Right ventricle myocardium inferior (tissue), 1 donor: ENCODE measurements at regions of chr14 and their contacts with region 1.

Region 1: GRCh38 chr14:77097700-77098528 is at the start of gene CIPC:
- DNase-seq: peak; percentile 100
- ATAC-seq: peak; percentile 97
- total RNA-seq, gene CIPC: 72.7 TPM

Region 2: DNA sequence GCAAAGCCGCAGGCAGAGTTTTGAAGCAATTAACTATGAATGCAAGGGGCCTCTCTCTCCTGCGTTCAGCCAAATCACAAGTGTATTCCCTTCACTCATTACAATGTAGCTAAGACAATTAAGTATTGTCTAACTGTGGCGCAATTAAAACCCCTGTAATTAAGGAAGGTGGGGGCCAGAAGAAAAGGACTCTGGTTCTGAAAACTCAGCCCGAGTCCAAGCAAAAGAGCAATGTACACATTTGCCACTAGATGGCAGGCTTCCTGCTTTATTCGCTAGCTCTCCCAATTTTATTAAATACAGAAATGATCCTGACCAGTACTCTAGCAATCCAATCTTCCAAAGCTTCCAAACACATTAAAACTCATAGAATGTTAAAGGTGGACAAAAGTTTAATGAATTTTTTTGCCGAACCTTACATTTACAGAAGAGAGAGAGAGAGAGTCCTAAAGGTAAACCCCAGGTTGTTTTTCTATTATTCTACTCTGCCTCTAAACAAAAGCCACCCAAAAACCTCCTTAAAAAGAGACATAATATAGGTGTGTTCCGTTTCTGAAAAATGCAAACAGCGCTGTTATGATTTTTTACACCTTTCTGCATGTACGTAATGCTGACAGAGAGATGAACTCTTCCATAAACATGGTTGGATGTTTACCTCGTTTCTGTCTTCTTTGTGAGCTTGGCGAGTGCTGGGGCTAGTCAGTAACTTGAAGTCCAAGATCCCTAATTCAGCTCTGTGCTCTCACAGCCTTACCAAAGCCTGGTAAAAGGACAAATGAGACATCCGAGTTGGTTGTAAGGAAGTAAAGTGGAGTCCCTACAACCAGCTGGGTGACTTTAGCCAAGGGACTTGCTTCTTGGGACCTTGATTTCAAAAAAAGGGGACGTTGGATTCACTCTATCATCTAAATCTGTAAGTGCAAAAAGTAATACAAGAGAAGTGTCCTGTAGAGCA is 387.6 kb before region 1 on chr14:
- intact Hi-C with region 1: loop called (anchors 10 kb)
- DNase-seq: no peak
- ATAC-seq: peak; percentile 63

Region 3: DNA sequence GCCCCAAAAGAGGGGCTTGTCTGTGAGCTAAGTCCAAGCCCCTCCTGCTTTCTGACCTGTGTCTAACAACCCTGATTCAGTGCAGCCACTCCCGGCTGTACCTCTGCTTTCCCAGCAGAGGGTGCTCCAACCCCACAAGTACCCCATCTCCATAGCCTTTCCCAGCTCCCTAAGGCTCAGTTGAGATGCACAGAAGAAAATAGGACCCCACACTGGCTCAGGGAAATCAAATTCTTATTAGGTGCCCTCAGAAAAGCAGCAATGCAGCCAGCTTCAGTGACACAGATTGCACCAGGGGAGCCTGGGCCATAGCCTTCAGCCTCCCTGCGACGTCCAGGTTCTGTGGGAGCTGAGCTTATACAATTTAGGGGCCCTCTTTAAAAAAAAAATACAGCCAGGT is 221.8 kb before region 1 on chr14:
- intact Hi-C with region 1: loop called (anchors 2 kb)
- DNase-seq: no peak
- ATAC-seq: peak; percentile 92

Region 4: DNA sequence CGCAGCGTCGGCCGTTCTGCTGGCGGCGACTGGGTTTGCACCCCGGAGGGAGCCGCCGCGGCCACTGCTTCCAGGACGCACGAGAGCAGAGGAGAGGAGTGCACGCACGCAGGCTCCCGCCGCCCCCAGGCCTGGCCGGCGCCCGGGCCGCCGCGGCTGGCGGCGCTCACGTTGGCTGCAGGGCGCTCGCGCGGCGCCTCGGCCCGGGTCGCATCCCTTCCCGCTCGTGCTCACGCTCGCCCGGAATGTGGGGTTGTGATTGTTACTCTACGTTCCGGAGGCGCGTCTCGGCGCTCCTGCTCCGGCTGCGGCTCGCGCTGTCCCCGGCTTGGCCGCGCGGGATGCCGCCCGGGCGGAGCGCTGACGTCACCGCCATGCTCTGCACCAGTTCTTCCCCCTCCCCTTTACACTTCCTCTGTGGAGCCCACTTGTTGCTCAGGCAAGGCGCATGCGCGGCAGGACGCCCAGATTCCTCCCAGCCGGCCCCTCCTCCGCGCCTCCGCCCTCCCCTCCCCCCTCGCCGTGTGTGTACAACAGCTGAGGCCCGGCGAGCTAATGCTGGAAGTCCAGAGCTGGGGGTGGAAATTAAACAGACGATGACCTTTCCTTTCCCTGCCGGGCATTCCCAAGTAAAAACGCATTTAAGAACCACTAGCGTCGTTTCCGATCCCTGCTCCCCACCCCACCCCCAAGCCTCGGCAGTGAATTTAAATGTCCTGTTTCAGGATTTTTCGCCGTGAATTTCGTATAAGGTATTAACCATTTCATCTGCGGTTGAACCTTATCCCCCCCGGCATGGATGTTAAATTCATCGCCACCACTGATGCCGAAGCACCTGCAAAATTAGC is 69.3 kb before region 1 on chr14 and contains the start of gene IRF2BPL:
- intact Hi-C with region 1: loop called (anchors 5 kb)
- DNase-seq: peak; percentile 99
- ATAC-seq: peak; percentile 74
- total RNA-seq, gene IRF2BPL: 41.1 TPM

Region 5: GRCh38 chr14:77040059-77040740 is 57.7 kb before region 1 on chr14:
- intact Hi-C with region 1: loop called (anchors 5 kb)
- DNase-seq: peak; percentile 100
- ATAC-seq: peak; percentile 85

Region 6: GRCh38 chr14:77067632-77068514 is 30.0 kb before region 1 on chr14:
- intact Hi-C with region 1: loop called (anchors 2 kb)
- DNase-seq: peak; percentile 81
- ATAC-seq: peak; percentile 70

Region 7: DNA sequence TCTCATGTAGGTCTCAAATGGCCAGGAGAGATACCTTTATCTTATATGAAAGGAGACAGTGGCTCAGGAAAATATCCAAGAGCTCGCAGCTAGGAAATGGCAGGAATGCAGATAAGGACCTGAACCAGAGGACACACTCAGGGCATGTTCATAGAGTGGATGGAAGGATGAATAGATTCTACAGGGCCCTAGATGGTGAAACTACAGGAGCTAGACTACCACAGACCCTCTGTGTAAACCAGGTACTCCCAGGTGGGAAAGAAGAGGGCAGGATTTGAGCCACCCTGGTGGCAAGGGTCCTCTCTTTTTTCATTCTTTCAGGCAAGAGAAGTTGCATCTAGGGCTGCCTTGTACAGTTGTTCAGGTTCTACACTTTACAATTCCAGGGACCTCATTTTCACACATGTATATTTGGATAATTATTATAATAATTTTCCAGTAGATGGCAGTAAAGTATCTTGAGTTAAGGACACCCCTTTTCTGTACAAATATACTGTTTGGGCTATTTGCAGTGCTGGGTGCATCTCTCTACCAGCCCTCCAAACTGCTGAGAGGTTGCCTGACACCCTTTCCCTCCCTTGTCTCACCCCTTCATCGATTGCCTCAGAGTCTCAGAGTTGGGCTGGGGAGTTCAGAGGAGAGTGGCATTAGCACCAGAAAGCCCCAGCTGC is 54.1 kb after region 1 on chr14:
- intact Hi-C with region 1: no loop called
- DNase-seq: no peak
- ATAC-seq: no peak